ENCODE measurements at regions of chr11 and their contacts with region 1.

Region 1: GRCh38 chr11:2166091-2166851 is 5.3 kb upstream of the INS start:
- DNase-seq: peak; percentile 23
- H3K4me3 ChIP-seq: peak overlapping the region in 2 of 3 experiments; percentile 18 to 24
- H3K27ac ChIP-seq: no peak overlapping the region
- H3K4me1 ChIP-seq: peaks cover 3% of the 10 kb centered on the region
- H3K27me3 ChIP-seq: peaks cover 4% of the 10 kb centered on the region
- CTCF ChIP-seq: peak; percentile 28 to 67

Region 2: GRCh38 chr11:2196970-2197770 is 30.9 kb after region 1 on chr11:
- CTCF ChIA-PET with region 1: no interaction called
- dilution Hi-C with region 1: no loop called
- in situ Hi-C with region 1: no loop called
- intact Hi-C with region 1: loop called (anchors 1 kb)
- DNase-seq: peak; percentile 36
- H3K4me3 ChIP-seq: no peak overlapping the region
- H3K27ac ChIP-seq: no peak overlapping the region
- H3K4me1 ChIP-seq: peaks cover 3% of the 10 kb centered on the region
- H3K27me3 ChIP-seq: no peaks in the 10 kb centered on the region
- CTCF ChIP-seq: peak; percentile 92 to 98

Region 3: DNA sequence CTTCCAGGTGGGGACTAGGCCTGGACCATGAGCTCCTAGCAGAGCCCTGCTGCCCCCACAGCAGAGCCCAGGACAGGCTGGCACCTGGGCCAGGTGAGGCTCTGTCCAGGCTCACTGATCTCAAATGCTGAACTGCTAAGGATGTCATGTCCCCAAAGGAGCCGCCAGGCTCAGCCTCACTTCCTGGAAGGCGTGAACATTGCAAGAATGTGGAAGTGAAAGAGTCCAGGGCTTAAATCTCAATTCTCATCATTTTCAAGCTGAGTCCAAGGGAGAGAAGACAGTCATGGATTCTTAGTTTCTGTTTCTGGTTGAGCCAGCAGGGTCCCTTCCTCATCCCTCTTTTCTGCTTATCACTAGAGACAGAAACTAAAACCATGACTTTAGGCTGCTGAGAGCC is 99.1 kb after region 1 on chr11:
- CTCF ChIA-PET with region 1: no interaction called
- dilution Hi-C with region 1: no loop called
- in situ Hi-C with region 1: no loop called
- intact Hi-C with region 1: no loop called
- DNase-seq: no peak
- H3K4me3 ChIP-seq: no peak overlapping the region
- H3K27ac ChIP-seq: no peak overlapping the region
- H3K4me1 ChIP-seq: peaks cover 11% of the 10 kb centered on the region
- H3K27me3 ChIP-seq: peaks cover 13% of the 10 kb centered on the region
- CTCF ChIP-seq: no peak